Vagina (tissue), 2 donors: ENCODE measurements at regions of chr9 and their contacts with region 1.

Region 1: GRCh38 chr9:127734747-127735529 is at the start of gene TOR2A:
- DNase-seq: peak in 1 of 2 donors; percentile 97
- H3K4me3 ChIP-seq: peak within 1 kb of the TSS; percentile 66 to 79
- H3K27ac ChIP-seq: peak within 1 kb of the TSS; percentile 93
- H3K4me1 ChIP-seq: peaks cover 23% of the 10 kb centered on the region
- H3K27me3 ChIP-seq: no peaks in the 10 kb centered on the region
- CTCF ChIP-seq: peak; percentile 88 to 98 (median 98)
- POLR2A ChIP-seq: peak in 1 of 2 donors; percentile 90
- total RNA-seq, gene TOR2A: 12.3 TPM

Region 2: DNA sequence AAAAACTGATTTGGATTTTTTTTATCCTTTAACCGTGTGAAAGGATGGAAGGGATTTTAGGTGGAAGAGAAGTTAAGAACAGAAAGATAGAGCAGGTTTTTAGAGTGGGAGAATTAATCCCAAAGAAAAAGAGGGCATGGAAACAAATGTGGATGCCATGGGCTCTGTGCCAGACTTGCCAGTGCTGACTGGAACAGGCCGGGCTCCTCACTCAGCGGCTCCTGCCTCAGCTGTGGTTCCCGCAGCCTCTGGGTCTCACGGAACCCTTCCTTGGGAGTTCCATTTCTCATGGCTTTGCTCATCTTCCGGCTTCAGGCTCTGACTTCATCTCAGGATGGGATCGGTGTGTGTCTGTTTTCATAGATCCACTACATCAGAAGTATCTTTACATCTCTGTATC is 368.3 kb before region 1 on chr9:
- intact Hi-C with region 1: no loop called
- DNase-seq: peak in 1 of 2 donors; percentile 40
- H3K4me3 ChIP-seq: no peak overlapping the region
- H3K27ac ChIP-seq: no peak overlapping the region
- H3K4me1 ChIP-seq: peaks cover 2% of the 10 kb centered on the region
- H3K27me3 ChIP-seq: no peaks in the 10 kb centered on the region
- CTCF ChIP-seq: no peak
- POLR2A ChIP-seq: no peak

Region 3: GRCh38 chr9:127503947-127504782 is 230.8 kb before region 1 on chr9:
- intact Hi-C with region 1: loop called (anchors 10 kb)
- DNase-seq: no peak
- H3K4me3 ChIP-seq: no peak overlapping the region
- H3K27ac ChIP-seq: peak overlapping the region; percentile 37
- H3K4me1 ChIP-seq: no peaks in the 10 kb centered on the region
- H3K27me3 ChIP-seq: no peaks in the 10 kb centered on the region
- CTCF ChIP-seq: peak; percentile 87 to 94 (median 91)
- POLR2A ChIP-seq: no peak

Region 4: DNA sequence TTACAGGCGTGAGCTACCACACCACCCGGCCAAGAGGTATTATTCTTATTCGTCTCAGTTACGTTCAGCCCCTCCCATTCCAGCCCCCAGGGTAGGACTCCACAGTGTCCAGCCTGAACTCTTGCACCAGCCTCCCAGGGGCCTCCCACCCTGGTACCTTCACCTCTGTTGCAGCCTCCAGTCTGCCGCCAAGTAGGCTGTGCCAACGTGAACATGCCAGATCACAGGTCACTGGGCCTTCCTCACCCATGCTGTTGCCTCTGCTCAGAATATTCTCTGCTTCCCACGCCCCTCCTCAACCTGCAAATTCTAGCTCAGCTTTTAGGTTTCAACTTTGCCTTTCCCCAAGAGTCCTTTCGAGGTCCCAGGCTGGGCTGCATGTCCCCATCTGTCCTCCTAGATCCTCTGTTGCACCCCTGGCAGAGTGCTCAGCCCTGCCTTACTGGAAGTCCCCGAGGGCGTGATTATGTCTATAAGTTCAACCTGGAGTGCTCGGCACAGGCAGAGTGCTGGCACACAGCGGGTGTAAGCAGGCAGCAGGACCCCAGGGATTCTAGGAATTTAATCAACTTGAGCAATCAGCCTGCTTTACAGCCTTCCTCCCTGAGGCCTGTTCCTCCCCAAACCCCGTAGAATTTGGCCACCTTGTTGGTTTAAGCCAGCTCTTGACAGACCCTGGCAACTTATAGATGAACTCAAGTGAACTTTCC is 135.9 kb before region 1 on chr9:
- intact Hi-C with region 1: loop called (anchors 5 kb)
- DNase-seq: no peak
- H3K4me3 ChIP-seq: no peak overlapping the region
- H3K27ac ChIP-seq: no peak overlapping the region
- H3K4me1 ChIP-seq: no peaks in the 10 kb centered on the region
- H3K27me3 ChIP-seq: no peaks in the 10 kb centered on the region
- CTCF ChIP-seq: no peak
- POLR2A ChIP-seq: no peak

Region 5: GRCh38 chr9:127697575-127697974 is 37.4 kb before region 1 on chr9:
- intact Hi-C with region 1: loop called (anchors 2 kb)
- DNase-seq: no peak
- H3K4me3 ChIP-seq: no peak overlapping the region
- H3K27ac ChIP-seq: peak overlapping the region; percentile 87
- H3K4me1 ChIP-seq: peaks cover 9% of the 10 kb centered on the region
- H3K27me3 ChIP-seq: no peaks in the 10 kb centered on the region
- CTCF ChIP-seq: no peak
- POLR2A ChIP-seq: no peak

Region 6: DNA sequence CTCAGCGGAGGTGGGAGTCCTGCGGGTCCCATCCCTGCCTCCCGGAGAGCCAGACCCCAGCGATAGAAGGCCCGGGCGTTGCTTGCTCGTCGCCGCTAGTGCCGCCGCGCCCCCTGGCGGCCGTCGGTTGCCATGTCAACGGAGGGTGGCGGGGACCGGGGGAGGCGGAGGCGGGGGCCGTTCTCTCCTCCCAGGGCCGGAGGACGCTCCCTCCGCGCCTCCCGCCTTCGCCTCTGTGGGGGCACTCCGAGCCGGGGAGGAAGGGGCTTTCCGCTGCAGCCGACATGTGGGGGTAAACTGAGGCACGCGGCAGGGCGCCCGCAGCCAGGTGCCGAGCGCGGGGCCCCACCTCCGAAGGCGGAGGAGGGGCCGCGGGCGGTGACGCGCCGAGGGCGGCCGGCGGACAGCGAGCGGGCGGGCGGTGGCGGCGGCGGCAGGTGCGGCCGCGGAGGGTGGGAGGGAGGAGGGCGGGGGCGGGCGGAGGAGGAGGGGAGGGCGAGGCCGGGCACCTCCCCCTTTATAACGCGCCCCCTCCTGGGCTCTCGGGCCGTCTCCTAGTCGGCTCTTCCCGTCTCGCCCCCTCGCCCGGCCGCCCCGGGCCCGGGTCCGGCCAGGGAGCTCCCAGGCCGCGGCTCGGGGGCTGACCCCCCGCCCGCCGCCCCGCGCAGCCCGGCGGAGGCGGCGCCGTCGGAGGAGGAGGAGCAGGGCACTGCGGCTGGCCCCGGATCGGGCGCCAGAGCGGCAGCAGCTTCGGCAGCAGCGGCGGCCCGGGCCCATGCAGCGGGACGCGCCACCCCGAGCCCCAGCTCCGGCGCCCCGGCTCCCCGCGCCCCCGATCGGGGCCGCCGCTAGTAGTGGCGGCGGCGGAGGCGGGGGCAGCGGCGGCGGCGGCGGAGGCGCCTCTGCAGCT is 50.3 kb after region 1 on chr9:
- intact Hi-C with region 1: loop called (anchors 2 kb)
- DNase-seq: no peak
- H3K4me3 ChIP-seq: peak overlapping the region; percentile 53 to 99
- H3K27ac ChIP-seq: peak overlapping the region; percentile 91
- H3K4me1 ChIP-seq: peaks cover 47% of the 10 kb centered on the region
- H3K27me3 ChIP-seq: no peaks in the 10 kb centered on the region
- CTCF ChIP-seq: peak; percentile 89 to 99 (median 93)
- POLR2A ChIP-seq: no peak

Region 7: DNA sequence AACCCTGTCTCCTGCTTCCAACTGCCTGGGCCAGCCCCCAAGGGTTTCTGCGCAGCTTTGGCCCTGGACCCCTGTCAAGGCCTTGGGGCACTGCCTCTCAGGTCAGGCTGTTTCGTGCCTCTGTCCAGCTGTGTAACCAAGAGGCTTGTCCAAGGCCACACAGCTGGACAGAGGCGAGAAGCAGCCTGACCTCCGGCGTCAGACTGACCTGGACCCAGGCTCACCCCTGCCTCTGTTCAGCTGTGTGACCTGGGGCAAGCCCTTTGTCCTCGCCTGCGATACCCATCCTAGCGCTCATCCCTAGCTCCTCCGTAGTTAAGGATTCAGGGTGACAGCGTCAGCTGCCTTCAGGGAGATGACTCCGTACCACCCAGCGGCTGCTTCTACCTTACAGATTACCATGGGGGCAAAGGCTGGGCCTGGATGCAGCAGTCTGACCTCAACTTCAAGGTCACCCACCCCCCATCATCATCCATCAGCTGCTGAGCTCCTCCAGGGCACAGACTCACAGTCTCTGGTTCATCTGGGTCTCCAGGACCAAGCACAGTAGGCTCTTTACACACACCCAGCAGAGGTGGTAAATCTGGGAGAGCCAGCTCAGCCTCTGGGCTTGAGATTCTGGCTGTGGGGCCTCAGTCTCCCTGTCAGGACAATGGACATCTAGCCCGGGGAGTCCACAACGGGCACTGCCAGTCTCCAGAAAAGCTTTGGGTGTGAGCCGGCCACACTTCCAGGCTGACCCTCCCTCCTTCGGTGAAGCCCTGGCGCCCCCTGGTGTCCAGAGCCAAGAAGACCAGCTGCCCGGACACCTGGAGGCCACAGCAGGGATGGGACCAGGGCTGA is 134.6 kb after region 1 on chr9:
- intact Hi-C with region 1: loop called (anchors 5 kb)
- DNase-seq: no peak
- H3K4me3 ChIP-seq: no peak overlapping the region
- H3K27ac ChIP-seq: peak overlapping the region; percentile 53
- H3K4me1 ChIP-seq: peaks cover 21% of the 10 kb centered on the region
- H3K27me3 ChIP-seq: no peaks in the 10 kb centered on the region
- CTCF ChIP-seq: peak; percentile 73 to 96 (median 89)
- POLR2A ChIP-seq: peak in 1 of 2 donors; percentile 2

Region 8: DNA sequence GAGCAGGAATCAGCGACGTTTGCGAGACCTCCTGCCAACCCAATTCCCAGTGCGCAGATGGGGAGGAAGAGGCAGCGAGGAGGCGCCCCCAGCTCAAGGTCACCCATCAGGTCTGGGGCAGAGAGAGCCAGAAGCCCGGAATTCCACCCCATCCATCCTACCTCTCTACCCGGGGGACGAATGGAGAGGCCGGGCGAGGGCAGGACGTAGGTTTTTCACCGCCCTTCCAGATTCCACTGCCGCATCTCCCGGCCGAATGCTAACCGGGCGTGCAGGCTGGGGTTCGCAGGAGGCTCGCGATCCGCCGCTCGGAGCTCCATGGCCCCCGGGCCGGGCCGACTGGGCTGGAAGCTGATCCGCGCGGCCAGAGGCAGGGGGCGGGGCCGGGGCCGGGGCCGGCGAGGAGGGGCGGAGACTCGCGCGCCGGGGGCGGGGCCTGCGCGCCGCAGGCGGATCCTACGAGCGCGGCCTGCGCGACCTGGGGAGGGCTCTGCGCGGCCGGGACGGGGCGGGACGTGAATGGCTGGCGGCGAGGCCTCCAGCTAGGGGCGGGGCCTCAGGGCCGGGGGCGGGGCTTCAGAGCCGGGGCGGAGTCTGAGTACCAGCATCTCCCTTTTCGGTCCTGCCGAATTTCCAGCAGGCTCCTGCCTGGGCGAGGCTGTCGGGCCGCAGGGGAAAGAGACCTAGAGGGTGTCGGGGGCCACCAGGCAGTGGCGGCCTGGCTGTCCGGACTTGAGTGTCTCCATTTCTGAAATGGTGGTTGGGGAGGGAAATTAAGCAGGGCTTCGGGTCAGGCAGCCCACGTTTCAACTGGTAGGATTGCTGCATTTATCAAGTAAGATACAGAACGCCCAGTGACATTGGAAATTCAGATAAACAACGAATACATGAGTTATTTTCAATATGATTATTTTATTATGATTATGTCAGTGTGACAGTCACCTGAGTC is 182.0 kb after region 1 on chr9 and contains the start of gene ST6GALNAC4:
- intact Hi-C with region 1: loop called (anchors 2 kb)
- DNase-seq: no peak
- H3K4me3 ChIP-seq: peak within 1 kb of the TSS; percentile 81 to 84
- H3K27ac ChIP-seq: peak within 1 kb of the TSS; percentile 74
- H3K4me1 ChIP-seq: peaks cover 63% of the 10 kb centered on the region
- H3K27me3 ChIP-seq: no peaks in the 10 kb centered on the region
- CTCF ChIP-seq: no peak
- POLR2A ChIP-seq: peak in 1 of 2 donors; percentile 35
- total RNA-seq, gene ST6GALNAC4: 33.1 TPM